ENCODE measurements at regions of chr14 and their contacts with region 1.

Region 1: DNA sequence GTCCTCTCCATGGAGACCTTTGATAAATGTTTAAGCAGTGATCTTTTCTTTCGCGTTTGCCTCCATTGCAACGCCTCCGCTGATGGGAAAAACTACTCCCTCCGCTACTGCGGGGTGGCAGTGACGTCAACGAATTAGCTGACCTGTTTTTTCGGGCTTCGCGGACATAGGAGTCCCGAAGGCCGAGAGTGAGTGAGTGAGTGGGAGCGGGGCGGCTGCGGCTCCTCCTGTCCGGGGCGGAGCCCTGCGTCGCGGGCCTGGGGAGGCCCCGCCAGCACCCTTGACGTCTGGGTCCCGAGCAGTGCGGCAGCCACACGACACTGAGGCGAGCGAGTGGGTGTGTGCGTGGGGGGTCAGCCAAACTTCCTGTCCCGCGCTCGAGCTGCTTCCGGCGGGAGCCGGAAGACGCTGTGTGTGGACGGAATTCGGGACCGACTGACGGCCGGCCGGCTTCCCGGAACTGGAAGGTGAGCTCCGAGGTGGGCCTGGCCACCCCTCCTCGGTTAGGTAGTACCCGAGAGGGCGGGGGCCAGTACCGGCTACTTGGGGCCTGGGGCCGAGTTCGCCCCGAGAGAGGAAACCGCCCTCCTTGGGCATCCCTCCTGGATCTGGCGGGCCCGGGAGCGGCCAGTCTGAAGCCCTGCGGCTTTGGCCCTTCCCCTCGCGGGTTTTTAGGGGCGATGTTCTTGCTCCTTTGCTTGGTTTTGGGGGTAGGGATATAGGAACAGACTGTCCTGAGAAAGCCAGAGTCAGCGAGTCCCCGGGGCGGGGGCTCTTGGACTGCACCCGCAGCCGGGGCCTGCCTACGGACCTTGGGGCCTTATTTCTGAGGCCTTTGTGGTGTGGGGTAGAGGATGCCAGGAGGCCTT is at the start of gene ZNF410:
- DNase-seq: peak; percentile 80
- ATAC-seq: peak; percentile 98
- H3K4me3 ChIP-seq: peak within 1 kb of the TSS; percentile 91
- H3K27ac ChIP-seq: peak within 1 kb of the TSS; percentile 83
- H3K4me1 ChIP-seq: peaks cover 11% of the 10 kb centered on the region
- H3K27me3 ChIP-seq: no peaks in the 10 kb centered on the region
- CTCF ChIP-seq: no peak
- EP300 ChIP-seq: peak; percentile 38 to 60; a peak in 2 of 4 replicates
- POLR2A ChIP-seq: peak; percentile 94
- RAD21 ChIP-seq: no peak
- polyA plus RNA-seq, gene ZNF410: 51.2 to 56.6 TPM

Region 2: GRCh38 chr14:73851644-73852382 is 34.9 kb before region 1 on chr14 and contains the start of gene PTGR2:
- CTCF ChIA-PET with region 1: interaction called, 6 read pairs
- POLR2A ChIA-PET with region 1: interaction called, 13 read pairs
- RAD21 ChIA-PET with region 1: interaction called, 7 read pairs
- SMC1A ChIA-PET with region 1: interaction called, 5 read pairs
- in situ Hi-C with region 1: no loop called
- intact Hi-C with region 1: loop called (anchors 2 kb)
- DNase-seq: peak; percentile 74
- ATAC-seq: peak; percentile 97
- H3K4me3 ChIP-seq: peak within 1 kb of the TSS; percentile 76
- H3K27ac ChIP-seq: peak within 1 kb of the TSS; percentile 61
- H3K4me1 ChIP-seq: peaks cover 3% of the 10 kb centered on the region; the same call in 1 of the 2 replicates
- H3K27me3 ChIP-seq: no peaks in the 10 kb centered on the region
- CTCF ChIP-seq: peak in 1 of 3 experiments; percentile 15; a peak in 1 of 6 replicates
- EP300 ChIP-seq: no peak
- POLR2A ChIP-seq: peak; percentile 93
- RAD21 ChIP-seq: no peak
- polyA plus RNA-seq, gene PTGR2: 8.9 to 9.6 TPM

Region 3: GRCh38 chr14:73949744-73950734 is 63.4 kb after region 1 on chr14 and contains the starts of genes COQ6 and FAM161B:
- CTCF ChIA-PET with region 1: no interaction called
- POLR2A ChIA-PET with region 1: no interaction called
- RAD21 ChIA-PET with region 1: no interaction called
- SMC1A ChIA-PET with region 1: interaction called, 3 read pairs
- in situ Hi-C with region 1: no loop called
- intact Hi-C with region 1: loop called (anchors 1 kb)
- DNase-seq: peak; percentile 90
- ATAC-seq: peak; percentile 96
- H3K4me3 ChIP-seq: peak within 1 kb of the TSS; percentile 92
- H3K27ac ChIP-seq: peak within 1 kb of the TSS; percentile 74
- H3K4me1 ChIP-seq: peaks cover 13% of the 10 kb centered on the region
- H3K27me3 ChIP-seq: no peaks in the 10 kb centered on the region
- CTCF ChIP-seq: peak; percentile 13 to 43 (median 28); a peak in 3 of 6 replicates
- EP300 ChIP-seq: no peak
- POLR2A ChIP-seq: peak; percentile 99
- RAD21 ChIP-seq: no peak
- polyA plus RNA-seq, gene COQ6: 5.4 to 10.8 TPM
- polyA plus RNA-seq, gene FAM161B: 0.33 to 0.34 TPM

Region 4: GRCh38 chr14:74029136-74029535 is 142.5 kb after region 1 on chr14:
- CTCF ChIA-PET with region 1: no interaction called
- POLR2A ChIA-PET with region 1: no interaction called
- RAD21 ChIA-PET with region 1: no interaction called
- SMC1A ChIA-PET with region 1: no interaction called
- in situ Hi-C with region 1: no loop called
- intact Hi-C with region 1: no loop called
- DNase-seq: no peak
- ATAC-seq: no peak
- H3K4me3 ChIP-seq: no peak overlapping the region
- H3K27ac ChIP-seq: no peak overlapping the region
- H3K4me1 ChIP-seq: no peaks in the 10 kb centered on the region
- H3K27me3 ChIP-seq: no peaks in the 10 kb centered on the region
- CTCF ChIP-seq: no peak
- EP300 ChIP-seq: no peak
- POLR2A ChIP-seq: no peak
- RAD21 ChIP-seq: no peak

Region 5: DNA sequence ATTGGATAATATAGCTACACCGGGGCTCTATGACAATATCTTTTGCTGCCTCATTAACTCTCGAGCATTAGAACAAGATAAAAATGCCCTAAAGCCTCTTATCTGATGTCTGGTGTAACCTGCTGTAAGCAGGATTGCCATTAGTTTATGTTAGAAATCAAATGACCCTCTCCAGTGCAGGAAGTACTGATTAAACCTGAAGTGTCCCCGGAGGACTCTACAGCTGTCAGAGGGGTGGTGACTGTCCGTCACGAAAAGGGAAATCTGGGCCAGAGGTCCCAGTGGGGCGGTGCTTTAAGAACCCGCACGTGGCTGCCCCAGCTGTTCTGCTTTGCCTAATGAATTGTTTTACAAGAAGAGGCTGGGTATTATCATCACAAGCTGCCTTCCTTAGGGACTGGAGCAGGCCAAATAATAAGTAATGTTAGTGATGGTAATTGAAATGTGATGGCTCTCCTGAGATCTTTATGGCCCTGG is 253.7 kb after region 1 on chr14:
- CTCF ChIA-PET with region 1: no interaction called
- POLR2A ChIA-PET with region 1: no interaction called
- RAD21 ChIA-PET with region 1: no interaction called
- SMC1A ChIA-PET with region 1: no interaction called
- in situ Hi-C with region 1: no loop called
- intact Hi-C with region 1: no loop called
- DNase-seq: no peak
- ATAC-seq: peak; percentile 36; the same call in 2 of the 3 replicates
- H3K4me3 ChIP-seq: no peak overlapping the region
- H3K27ac ChIP-seq: no peak overlapping the region
- H3K4me1 ChIP-seq: no peaks in the 10 kb centered on the region
- H3K27me3 ChIP-seq: no peaks in the 10 kb centered on the region
- CTCF ChIP-seq: no peak
- EP300 ChIP-seq: no peak
- POLR2A ChIP-seq: no peak
- RAD21 ChIP-seq: no peak

Measured in GM12878 (cell line).